Mammary epithelial cell (primary cell): ENCODE measurements at regions of chr14 and their contacts with region 1.

Region 1: DNA sequence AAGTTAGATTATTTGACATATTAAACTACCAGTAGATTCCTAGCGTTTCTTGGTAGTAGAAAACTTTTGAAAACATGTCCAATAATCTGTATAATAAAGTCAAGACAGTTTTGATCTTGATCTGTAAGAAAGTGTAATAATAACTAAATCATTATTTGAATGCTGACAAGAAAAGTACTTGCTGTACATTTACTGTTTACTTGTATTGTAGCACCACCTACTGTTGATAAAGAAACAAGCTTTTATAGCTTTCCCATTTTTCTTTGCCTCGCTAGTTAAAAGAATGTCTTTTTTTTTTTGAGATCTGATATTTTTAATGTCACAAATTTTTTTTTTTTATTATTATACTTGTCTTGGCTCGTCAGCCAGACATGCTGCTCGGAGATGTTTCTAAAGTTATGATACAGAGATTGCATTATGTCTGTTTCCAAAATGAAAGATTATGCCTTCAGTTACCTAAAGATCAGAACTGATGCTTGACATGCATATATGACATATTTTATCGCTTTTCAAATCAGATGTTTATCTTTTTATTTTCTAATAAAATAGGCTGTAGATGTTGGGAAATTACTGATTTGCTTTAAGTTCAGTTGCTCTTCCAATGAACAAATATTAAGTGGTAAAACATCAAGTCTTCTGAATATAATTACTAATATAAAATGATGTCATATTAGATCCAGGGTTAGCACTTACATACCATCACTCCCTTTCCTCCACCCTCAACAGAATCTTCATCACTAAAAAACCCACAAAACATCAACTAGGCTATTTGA is 140.5 kb downstream of the AKAP6 start:
- DNase-seq: peak; percentile 39
- H3K4me3 ChIP-seq: no peak overlapping the region
- H3K27ac ChIP-seq: peak overlapping the region; percentile 98
- H3K4me1 ChIP-seq: peaks cover 67% of the 10 kb centered on the region
- H3K27me3 ChIP-seq: no peaks in the 10 kb centered on the region
- CTCF ChIP-seq: peak; percentile 51 to 52

Region 2: GRCh38 chr14:31510222-31510621 is 959.4 kb before region 1 on chr14:
- CTCF ChIA-PET with region 1: no interaction called
- dilution Hi-C with region 1: no loop called
- in situ Hi-C with region 1: no loop called
- intact Hi-C with region 1: loop called (anchors 2 kb)
- DNase-seq: peak; percentile 20
- H3K4me3 ChIP-seq: no peak overlapping the region
- H3K27ac ChIP-seq: no peak overlapping the region
- H3K4me1 ChIP-seq: no peaks in the 10 kb centered on the region
- H3K27me3 ChIP-seq: no peaks in the 10 kb centered on the region
- CTCF ChIP-seq: peak; percentile 33 to 46

Region 3: GRCh38 chr14:32202998-32203882 is 266.3 kb before region 1 on chr14 and contains the start of gene RNU6-8:
- CTCF ChIA-PET with region 1: no interaction called
- dilution Hi-C with region 1: no loop called
- in situ Hi-C with region 1: no loop called
- intact Hi-C with region 1: loop called (anchors 2 kb)
- DNase-seq: peak; percentile 79
- H3K4me3 ChIP-seq: peak within 1 kb of the TSS; percentile 68 to 74 (median 74)
- H3K27ac ChIP-seq: peak within 1 kb of the TSS; percentile 91
- H3K4me1 ChIP-seq: peaks cover 38% of the 10 kb centered on the region
- H3K27me3 ChIP-seq: no peaks in the 10 kb centered on the region
- CTCF ChIP-seq: no peak
- total RNA-seq, gene RNU6-8: not detected

Region 4: DNA sequence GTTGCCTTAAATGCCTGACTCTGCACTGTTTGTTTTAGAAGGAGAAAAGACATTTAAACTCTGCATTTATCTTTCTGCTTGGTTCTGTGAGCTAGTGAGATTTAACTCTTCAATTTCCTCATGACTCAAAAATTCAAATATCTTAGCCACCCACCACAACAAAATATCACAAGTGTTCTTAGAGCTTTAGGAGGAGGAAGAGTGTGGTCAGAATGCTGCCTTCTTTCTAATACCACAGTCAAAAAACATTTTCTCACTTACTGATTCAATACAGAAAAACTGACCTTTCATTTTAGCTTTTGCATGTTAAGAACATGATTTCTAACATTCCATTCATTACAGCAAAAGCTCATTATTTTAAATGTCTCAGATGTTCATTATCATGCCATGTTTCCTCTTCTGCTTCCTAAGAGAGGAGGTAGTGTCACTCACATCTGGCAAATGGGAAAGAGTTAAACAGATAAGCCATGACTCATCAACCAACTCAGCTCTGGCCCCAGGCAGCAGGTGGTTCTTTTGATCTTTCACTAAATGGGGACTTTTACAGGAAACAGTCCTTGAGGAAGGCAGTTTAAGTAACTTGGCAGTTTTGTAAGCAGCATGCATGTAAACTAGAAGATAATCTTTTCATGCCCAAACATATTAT is 210.1 kb before region 1 on chr14:
- CTCF ChIA-PET with region 1: interaction called, 14 read pairs
- dilution Hi-C with region 1: no loop called
- in situ Hi-C with region 1: loop called (anchors 5 kb)
- intact Hi-C with region 1: loop called (anchors 1 kb)
- DNase-seq: peak; percentile 82
- H3K4me3 ChIP-seq: no peak overlapping the region
- H3K27ac ChIP-seq: no peak overlapping the region
- H3K4me1 ChIP-seq: peaks cover 10% of the 10 kb centered on the region
- H3K27me3 ChIP-seq: no peaks in the 10 kb centered on the region
- CTCF ChIP-seq: no peak

Region 5: GRCh38 chr14:32382704-32383103 is 86.9 kb before region 1 on chr14:
- CTCF ChIA-PET with region 1: interaction called, 3 read pairs
- dilution Hi-C with region 1: no loop called
- in situ Hi-C with region 1: no loop called
- intact Hi-C with region 1: loop called (anchors 1 kb)
- DNase-seq: peak; percentile 41
- H3K4me3 ChIP-seq: no peak overlapping the region
- H3K27ac ChIP-seq: no peak overlapping the region
- H3K4me1 ChIP-seq: peaks cover 9% of the 10 kb centered on the region
- H3K27me3 ChIP-seq: no peaks in the 10 kb centered on the region
- CTCF ChIP-seq: peak; percentile 65 to 88

Region 6: GRCh38 chr14:32408018-32408417 is 61.6 kb before region 1 on chr14:
- CTCF ChIA-PET with region 1: no interaction called
- dilution Hi-C with region 1: no loop called
- in situ Hi-C with region 1: no loop called
- intact Hi-C with region 1: no loop called
- DNase-seq: no peak
- H3K4me3 ChIP-seq: no peak overlapping the region
- H3K27ac ChIP-seq: no peak overlapping the region
- H3K4me1 ChIP-seq: no peaks in the 10 kb centered on the region
- H3K27me3 ChIP-seq: no peaks in the 10 kb centered on the region
- CTCF ChIP-seq: no peak

Region 7: GRCh38 chr14:32417956-32418552 is 51.5 kb before region 1 on chr14:
- CTCF ChIA-PET with region 1: no interaction called
- dilution Hi-C with region 1: no loop called
- in situ Hi-C with region 1: no loop called
- intact Hi-C with region 1: no loop called
- DNase-seq: peak; percentile 67
- H3K4me3 ChIP-seq: no peak overlapping the region
- H3K27ac ChIP-seq: no peak overlapping the region
- H3K4me1 ChIP-seq: peaks cover 25% of the 10 kb centered on the region
- H3K27me3 ChIP-seq: no peaks in the 10 kb centered on the region
- CTCF ChIP-seq: no peak

Region 8: DNA sequence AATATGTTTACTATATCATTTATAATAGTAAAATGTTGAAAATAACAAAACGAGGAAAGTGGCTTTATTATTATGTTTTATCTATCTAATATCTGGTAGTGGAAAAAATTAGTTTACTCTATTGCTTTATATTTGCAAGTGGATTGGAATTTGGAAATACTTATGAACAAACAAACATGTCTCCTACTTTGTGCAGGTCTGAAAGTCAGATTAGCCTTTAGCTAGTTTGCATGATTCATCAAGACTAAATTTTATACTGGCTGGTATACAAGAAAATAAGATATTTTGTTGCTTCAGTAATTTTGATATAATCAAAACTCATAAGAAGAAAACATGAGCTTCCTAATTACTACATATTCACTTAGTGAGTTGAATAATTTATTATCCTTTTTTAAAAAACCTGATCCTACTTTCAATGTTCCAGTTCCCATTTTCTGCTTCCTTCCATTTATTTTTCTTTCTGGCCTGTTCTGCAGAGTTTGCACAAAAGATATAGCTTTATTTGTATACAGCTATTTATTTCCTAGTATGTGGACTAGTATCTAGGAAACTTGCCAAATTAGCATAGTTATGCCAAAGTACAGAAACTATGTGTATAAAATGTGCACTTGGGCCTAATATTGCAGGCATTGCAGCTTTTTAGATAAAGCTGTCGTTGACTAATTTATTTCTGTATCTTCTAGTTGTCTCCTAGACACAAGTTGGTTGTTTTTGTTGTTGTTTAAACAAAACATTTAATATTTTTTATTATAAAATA is 18.5 kb before region 1 on chr14:
- CTCF ChIA-PET with region 1: no interaction called
- dilution Hi-C with region 1: no loop called
- in situ Hi-C with region 1: no loop called
- intact Hi-C with region 1: no loop called
- DNase-seq: no peak
- H3K4me3 ChIP-seq: no peak overlapping the region
- H3K27ac ChIP-seq: no peak overlapping the region
- H3K4me1 ChIP-seq: no peaks in the 10 kb centered on the region
- H3K27me3 ChIP-seq: no peaks in the 10 kb centered on the region
- CTCF ChIP-seq: no peak

Region 9: DNA sequence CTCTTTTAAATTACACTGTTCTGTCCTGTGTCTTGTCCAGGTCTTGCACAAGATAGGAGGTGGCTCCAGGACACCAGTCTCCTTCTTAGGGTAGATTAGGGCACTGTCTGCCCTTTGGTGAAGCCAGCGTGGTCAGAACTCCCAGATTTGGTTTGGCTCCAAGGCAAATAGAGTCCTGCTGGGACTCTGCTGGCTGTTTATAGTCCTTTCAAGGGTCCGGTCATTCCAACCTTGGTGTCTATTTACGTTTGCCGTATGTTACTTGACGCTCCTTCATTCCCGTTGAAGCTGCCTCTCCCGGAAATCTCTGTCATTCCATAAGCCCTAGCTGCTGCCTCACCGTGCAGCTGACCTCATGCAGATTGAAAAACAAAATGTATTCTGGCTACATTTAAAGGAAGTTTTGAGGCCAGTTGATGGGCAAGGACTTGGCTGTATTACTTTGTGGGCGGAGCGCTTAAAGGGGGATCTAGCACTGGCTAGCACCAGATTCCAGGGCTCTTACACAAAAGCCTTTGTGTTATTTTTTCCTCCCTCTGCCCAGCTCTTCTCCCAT is 40.1 kb after region 1 on chr14:
- CTCF ChIA-PET with region 1: interaction called, 4 read pairs
- dilution Hi-C with region 1: no loop called
- in situ Hi-C with region 1: loop called (anchors 5 kb)
- intact Hi-C with region 1: loop called (anchors 1 kb)
- DNase-seq: peak; percentile 93
- H3K4me3 ChIP-seq: peak overlapping the region in 1 of 3 experiments; percentile 10
- H3K27ac ChIP-seq: peak overlapping the region; percentile 87
- H3K4me1 ChIP-seq: peaks cover 41% of the 10 kb centered on the region
- H3K27me3 ChIP-seq: no peaks in the 10 kb centered on the region
- CTCF ChIP-seq: no peak